ENCODE measurements at regions of chr14 and their contacts with region 1.

Region 1: DNA sequence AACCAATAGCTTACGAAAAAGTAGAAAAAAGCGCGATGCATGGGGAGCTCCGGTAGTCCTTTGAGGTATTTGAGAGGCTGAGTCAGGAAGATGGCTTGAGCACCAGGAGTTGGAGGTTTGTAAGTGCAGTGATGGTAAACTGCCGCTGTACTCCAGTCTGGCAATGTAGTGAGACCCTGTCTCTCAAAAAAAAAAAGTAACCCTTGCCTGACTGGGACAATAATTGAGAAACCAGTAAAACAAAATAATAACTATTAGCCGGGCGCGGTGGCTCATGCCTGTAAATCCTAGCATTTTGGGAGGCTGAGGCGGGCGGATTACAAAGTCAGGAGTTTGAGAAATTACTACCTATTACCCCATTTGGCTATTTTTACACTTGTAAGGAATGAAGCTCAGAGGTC is 632 bp upstream of the ACOT2 start:
- DNase-seq: no peak
- H3K4me3 ChIP-seq: peak overlapping the region in 2 of 4 donors; percentile 57 to 67
- H3K27ac ChIP-seq: peak overlapping the region in 4 of 5 donors; percentile 88 to 95 (median 94)
- H3K4me1 ChIP-seq: peaks cover 11 to 22% of the 10 kb centered on the region in 2 donors
- H3K27me3 ChIP-seq: no peaks in the 10 kb centered on the region
- CTCF ChIP-seq: no peak
- POLR2A ChIP-seq: no peak

Region 2: GRCh38 chr14:73503648-73504047 is 64.7 kb before region 1 on chr14:
- intact Hi-C with region 1: loop called in 1 of 2 experiments (anchors 10 kb)
- DNase-seq: no peak
- H3K4me3 ChIP-seq: no peak overlapping the region
- H3K27ac ChIP-seq: no peak overlapping the region
- H3K4me1 ChIP-seq: no peaks in the 10 kb centered on the region
- H3K27me3 ChIP-seq: no peaks in the 10 kb centered on the region
- CTCF ChIP-seq: no peak
- POLR2A ChIP-seq: no peak

Region 3: DNA sequence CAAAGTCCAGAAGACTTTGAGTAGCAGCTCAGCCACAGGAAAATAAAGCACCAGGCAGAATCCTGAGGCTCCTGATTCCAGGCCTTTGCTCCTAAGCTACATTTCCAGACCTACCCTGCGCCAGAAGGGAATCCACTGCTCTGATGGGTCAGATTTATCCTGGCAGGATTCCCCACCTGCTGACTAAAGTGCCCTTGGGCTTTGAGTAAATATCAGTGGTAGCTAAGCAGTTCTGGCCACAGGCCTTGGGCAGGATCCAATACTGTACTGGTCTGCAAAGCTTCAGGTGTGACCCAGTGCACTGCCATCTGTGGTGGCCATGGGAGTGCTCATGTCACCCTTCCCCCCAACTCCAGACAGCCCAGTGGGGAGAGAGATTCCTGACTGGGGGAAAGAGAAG is 41.8 kb before region 1 on chr14:
- intact Hi-C with region 1: loop called in 1 of 2 experiments (anchors 5 kb)
- DNase-seq: peak; percentile 80 to 90 (median 87)
- H3K4me3 ChIP-seq: no peak overlapping the region
- H3K27ac ChIP-seq: peak overlapping the region in 3 of 5 donors; percentile 64 to 81 (median 78)
- H3K4me1 ChIP-seq: peaks cover 12 to 13% of the 10 kb centered on the region in 2 donors
- H3K27me3 ChIP-seq: no peaks in the 10 kb centered on the region
- CTCF ChIP-seq: no peak
- POLR2A ChIP-seq: no peak

Region 4: GRCh38 chr14:73785873-73786695 is 217.7 kb after region 1 on chr14:
- intact Hi-C with region 1: no loop called
- DNase-seq: peak; percentile 72 to 93 (median 87)
- H3K4me3 ChIP-seq: peak overlapping the region in 3 of 4 donors; percentile 4 to 89 (median 71)
- H3K27ac ChIP-seq: peak overlapping the region; percentile 92 to 99 (median 97)
- H3K4me1 ChIP-seq: peaks cover 39 to 73% of the 10 kb centered on the region in 2 donors
- H3K27me3 ChIP-seq: no peaks in the 10 kb centered on the region
- CTCF ChIP-seq: peak in 5 of 6 experiments; percentile 27 to 68 (median 57)
- POLR2A ChIP-seq: peak; percentile 75 to 90

Measured in adrenal gland (tissue), 19 donors.